ENCODE measurements at regions of chr11 and their contacts with region 1.

Region 1: DNA sequence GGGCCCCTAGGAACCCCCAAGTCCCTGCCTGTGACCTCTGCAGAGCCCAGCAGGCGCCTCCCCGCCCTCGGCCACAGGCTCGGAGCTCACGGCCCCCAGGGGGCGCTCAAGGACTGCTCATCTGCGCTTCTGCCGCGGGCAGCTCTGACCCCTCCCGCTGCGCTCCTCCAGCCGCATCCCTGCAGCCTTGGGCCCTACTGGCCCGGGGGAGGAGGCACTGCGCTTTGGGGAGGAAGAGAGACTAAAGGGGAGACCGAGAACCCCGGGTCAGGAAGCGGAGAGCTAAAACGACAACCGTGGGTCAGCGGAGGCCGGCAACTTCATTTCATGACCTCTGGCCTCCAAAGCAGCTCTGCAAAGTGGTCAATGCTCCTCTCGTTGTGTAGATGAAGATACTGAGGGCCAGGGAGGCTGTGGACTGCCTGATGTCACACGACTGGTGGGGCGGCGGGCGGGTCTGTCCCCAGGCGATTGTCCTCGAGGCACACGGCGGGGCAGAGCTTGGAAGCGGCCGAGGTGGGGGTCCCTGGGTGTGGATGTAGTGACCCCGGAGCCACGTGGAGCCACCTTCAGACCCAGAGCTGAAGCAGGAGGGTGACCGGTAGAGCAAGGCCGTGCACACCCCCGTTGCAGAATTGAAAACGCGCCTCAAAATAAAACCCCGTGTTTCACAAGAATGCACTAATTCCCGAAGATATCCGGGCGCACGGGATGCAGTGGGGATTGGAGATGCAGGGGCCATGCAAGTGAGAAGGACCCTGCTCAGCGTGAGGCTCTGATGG is 2.7 kb upstream of the KRTAP5-6 start:
- DNase-seq: peak; percentile 55 to 87 (median 72)
- ATAC-seq: peak; percentile 91
- H3K4me3 ChIP-seq: peak overlapping the region; percentile 54
- H3K4me3 Mint-ChIP-seq: peak overlapping the region in 4 of 10 donors; percentile 6 to 82 (median 13)
- H3K27ac ChIP-seq: no peak overlapping the region
- H3K27ac Mint-ChIP-seq: peak overlapping the region in 2 of 9 donors; percentile 60
- H3K4me1 ChIP-seq: peaks cover 6 to 10% of the 10 kb centered on the region in 2 donors
- H3K4me1 Mint-ChIP-seq: peaks cover 0 to 13% (median 8%) of the 10 kb centered on the region in 7 donors
- H3K27me3 ChIP-seq: no peaks in the 10 kb centered on the region
- H3K27me3 Mint-ChIP-seq: peaks cover 8 to 29% (median 13%) of the 10 kb centered on the region in 5 donors

Region 2: GRCh38 chr11:1652771-1653540 is 41.3 kb before region 1 on chr11:
- CTCF ChIA-PET with region 1: interaction called, 46 read pairs
- POLR2A ChIA-PET with region 1: no interaction called
- intact Hi-C with region 1: loop called in 1 of 2 experiments (anchors 5 kb)
- DNase-seq: peak; percentile 54 to 87 (median 78)
- ATAC-seq: peak; percentile 93
- H3K4me3 ChIP-seq: no peak overlapping the region
- H3K4me3 Mint-ChIP-seq: no peak overlapping the region
- H3K27ac ChIP-seq: no peak overlapping the region
- H3K27ac Mint-ChIP-seq: no peak overlapping the region
- H3K4me1 ChIP-seq: no peaks in the 10 kb centered on the region
- H3K4me1 Mint-ChIP-seq: peaks cover 0 to 4% (median 0%) of the 10 kb centered on the region in 7 donors
- H3K27me3 ChIP-seq: no peaks in the 10 kb centered on the region
- H3K27me3 Mint-ChIP-seq: peaks cover 0 to 19% (median 16%) of the 10 kb centered on the region in 5 donors

Region 3: GRCh38 chr11:1757861-1758610 is 63.8 kb after region 1 on chr11:
- CTCF ChIA-PET with region 1: interaction called, 20 read pairs
- POLR2A ChIA-PET with region 1: no interaction called
- intact Hi-C with region 1: loop called in 1 of 2 experiments (anchors 5 kb)
- DNase-seq: peak in 8 of 9 donors; percentile 25 to 61 (median 55)
- ATAC-seq: peak; percentile 61
- H3K4me3 ChIP-seq: peak overlapping the region; percentile 52
- H3K4me3 Mint-ChIP-seq: peak overlapping the region; percentile 67 to 96 (median 84)
- H3K27ac ChIP-seq: peak overlapping the region; percentile 68
- H3K27ac Mint-ChIP-seq: peak overlapping the region; percentile 76 to 94 (median 91)
- H3K4me1 ChIP-seq: peaks cover 55 to 81% of the 10 kb centered on the region in 2 donors
- H3K4me1 Mint-ChIP-seq: peaks cover 51 to 80% (median 70%) of the 10 kb centered on the region in 7 donors
- H3K27me3 ChIP-seq: no peaks in the 10 kb centered on the region
- H3K27me3 Mint-ChIP-seq: no peaks in the 10 kb centered on the region

Region 4: GRCh38 chr11:1827095-1827813 is 133.0 kb after region 1 on chr11:
- CTCF ChIA-PET with region 1: interaction called, 229 read pairs
- POLR2A ChIA-PET with region 1: interaction called, 20 read pairs
- intact Hi-C with region 1: loop called in 1 of 2 experiments (anchors 1 kb)
- DNase-seq: no peak
- ATAC-seq: no peak
- H3K4me3 ChIP-seq: no peak overlapping the region
- H3K4me3 Mint-ChIP-seq: no peak overlapping the region
- H3K27ac ChIP-seq: no peak overlapping the region
- H3K27ac Mint-ChIP-seq: no peak overlapping the region
- H3K4me1 ChIP-seq: no peaks in the 10 kb centered on the region
- H3K4me1 Mint-ChIP-seq: peaks cover 0 to 1% (median 0%) of the 10 kb centered on the region in 7 donors
- H3K27me3 ChIP-seq: no peaks in the 10 kb centered on the region
- H3K27me3 Mint-ChIP-seq: peaks cover 0 to 11% (median 3%) of the 10 kb centered on the region in 5 donors

Region 5: GRCh38 chr11:1837171-1838076 is 143.2 kb after region 1 on chr11:
- CTCF ChIA-PET with region 1: interaction called, 229 read pairs
- POLR2A ChIA-PET with region 1: interaction called, 20 read pairs
- intact Hi-C with region 1: loop called in 1 of 2 experiments (anchors 1 kb)
- DNase-seq: peak; percentile 53 to 83 (median 75)
- ATAC-seq: peak; percentile 84
- H3K4me3 ChIP-seq: no peak overlapping the region
- H3K4me3 Mint-ChIP-seq: peak overlapping the region in 1 of 10 donors; percentile 14
- H3K27ac ChIP-seq: no peak overlapping the region
- H3K27ac Mint-ChIP-seq: peak overlapping the region in 1 of 9 donors; percentile 19
- H3K4me1 ChIP-seq: peaks cover 0 to 7% of the 10 kb centered on the region in 2 donors
- H3K4me1 Mint-ChIP-seq: peaks cover 0 to 11% (median 7%) of the 10 kb centered on the region in 7 donors
- H3K27me3 ChIP-seq: no peaks in the 10 kb centered on the region
- H3K27me3 Mint-ChIP-seq: peaks cover 0 to 3% (median 0%) of the 10 kb centered on the region in 5 donors

Region 6: GRCh38 chr11:2151500-2152257 is 457.4 kb after region 1 on chr11:
- CTCF ChIA-PET with region 1: interaction called, 34 read pairs
- POLR2A ChIA-PET with region 1: no interaction called
- intact Hi-C with region 1: loop called (anchors 1 to 2 kb)
- DNase-seq: peak; percentile 58 to 83 (median 78)
- ATAC-seq: peak; percentile 89
- H3K4me3 ChIP-seq: peak overlapping the region; percentile 44
- H3K4me3 Mint-ChIP-seq: peak overlapping the region in 9 of 10 donors; percentile 20 to 71 (median 58)
- H3K27ac ChIP-seq: no peak overlapping the region
- H3K27ac Mint-ChIP-seq: peak overlapping the region in 4 of 9 donors; percentile 25 to 63 (median 32)
- H3K4me1 ChIP-seq: peaks cover 6% of the 10 kb centered on the region in 2 donors
- H3K4me1 Mint-ChIP-seq: peaks cover 0 to 12% (median 6%) of the 10 kb centered on the region in 7 donors
- H3K27me3 ChIP-seq: peaks cover 0 to 8% of the 10 kb centered on the region in 2 donors
- H3K27me3 Mint-ChIP-seq: peaks cover 18 to 40% (median 38%) of the 10 kb centered on the region in 5 donors